Astrocyte of the cerebellum (primary cell): ENCODE measurements at regions of chr7 and their contacts with region 1.

Region 1: GRCh38 chr7:141262101-141263090 is 188.5 kb downstream of the TMEM178B start:
- DNase-seq: no peak
- H3K4me3 ChIP-seq: no peak overlapping the region
- CTCF ChIP-seq: peak; percentile 59

Region 2: GRCh38 chr7:140732436-140732835 is 530.0 kb before region 1 on chr7:
- in situ Hi-C with region 1: no loop called
- DNase-seq: no peak
- H3K4me3 ChIP-seq: no peak overlapping the region
- CTCF ChIP-seq: no peak

Region 3: GRCh38 chr7:141208539-141208938 is 53.9 kb before region 1 on chr7:
- in situ Hi-C with region 1: no loop called
- DNase-seq: no peak
- H3K4me3 ChIP-seq: no peak overlapping the region
- CTCF ChIP-seq: no peak

Region 4: DNA sequence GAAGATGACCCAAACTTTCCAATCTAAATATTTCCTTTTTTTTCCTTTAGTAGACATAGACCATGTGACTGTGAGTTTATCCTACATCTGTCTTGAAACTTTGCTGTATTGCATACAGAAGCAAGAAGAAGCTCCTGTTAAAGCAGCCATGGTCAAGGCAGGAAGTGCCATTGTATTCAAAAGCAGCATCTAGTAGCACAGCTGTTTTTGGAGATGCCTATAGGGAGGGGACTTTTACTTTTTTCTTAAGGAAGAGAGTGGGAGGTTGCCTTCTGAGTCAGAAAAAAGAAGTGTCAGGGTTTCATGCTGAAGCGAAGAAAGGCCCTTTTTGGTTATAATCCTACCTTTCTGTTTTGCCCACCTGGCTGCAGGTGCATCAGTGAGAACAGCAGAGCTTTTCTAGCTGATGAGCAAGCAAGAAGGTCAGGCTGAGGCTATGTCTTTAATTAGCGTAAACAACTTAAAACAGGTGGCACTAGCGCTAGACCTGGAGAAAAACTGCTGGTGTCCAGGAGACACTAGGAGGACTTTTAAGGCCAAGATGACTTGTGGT is 54.7 kb after region 1 on chr7:
- in situ Hi-C with region 1: loop called (anchors 5 kb)
- DNase-seq: no peak
- H3K4me3 ChIP-seq: no peak overlapping the region
- CTCF ChIP-seq: no peak